Endothelial cell of umbilical vein (primary cell): ENCODE measurements at regions of chr3 and their contacts with region 1.

Region 1: GRCh38 chr3:30538787-30539186 is 67.6 kb upstream of the TGFBR2 start:
- DNase-seq: peak; percentile 93
- H3K4me3 ChIP-seq: no peak overlapping the region
- H3K27ac ChIP-seq: peak overlapping the region; percentile 97
- H3K4me1 ChIP-seq: peaks cover 26% of the 10 kb centered on the region
- H3K27me3 ChIP-seq: no peaks in the 10 kb centered on the region
- CTCF ChIP-seq: no peak
- POLR2A ChIP-seq: no peak

Region 2: DNA sequence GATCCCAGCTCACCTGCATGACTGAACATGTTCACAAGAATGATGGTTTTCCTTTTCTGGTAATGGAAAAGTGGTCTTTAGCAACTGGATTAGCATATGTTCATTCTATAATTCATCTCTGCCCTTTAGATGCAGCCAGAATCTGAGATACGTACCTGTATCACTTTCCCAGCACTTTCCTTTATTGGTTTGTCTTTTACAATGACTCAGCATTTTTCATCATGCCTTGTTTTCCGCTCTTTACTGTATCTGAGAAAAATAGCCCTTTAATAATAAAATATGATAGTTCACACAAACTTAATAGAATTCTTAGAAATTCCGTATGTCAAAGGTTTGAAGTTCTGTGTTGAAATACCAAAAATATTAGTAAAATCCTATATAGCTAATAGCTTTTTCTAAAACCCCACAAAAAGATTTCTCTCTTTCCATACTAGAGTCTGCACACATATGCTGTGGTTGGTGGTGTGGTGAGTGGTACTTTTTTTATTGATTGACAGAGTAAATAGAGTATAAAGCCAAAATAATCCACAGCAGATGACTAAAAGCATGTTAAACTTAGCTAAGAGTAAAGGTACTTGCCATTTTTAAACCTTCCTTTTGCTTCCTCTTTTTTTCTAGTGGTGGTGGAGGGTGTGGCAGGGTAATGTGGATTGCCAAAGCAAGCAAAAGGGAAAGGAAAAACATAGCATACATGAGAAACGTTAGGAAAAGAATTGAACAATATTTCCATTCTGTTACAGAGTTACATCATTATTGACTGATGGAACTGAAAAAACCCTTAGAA is 1586.8 kb before region 1 on chr3:
- CTCF ChIA-PET with region 1: no interaction called
- POLR2A ChIA-PET with region 1: no interaction called
- dilution Hi-C with region 1: no loop called
- intact Hi-C with region 1: no loop called
- DNase-seq: no peak
- H3K4me3 ChIP-seq: no peak overlapping the region
- H3K27ac ChIP-seq: no peak overlapping the region
- H3K4me1 ChIP-seq: no peaks in the 10 kb centered on the region
- H3K27me3 ChIP-seq: no peaks in the 10 kb centered on the region
- CTCF ChIP-seq: no peak
- POLR2A ChIP-seq: no peak

Region 3: DNA sequence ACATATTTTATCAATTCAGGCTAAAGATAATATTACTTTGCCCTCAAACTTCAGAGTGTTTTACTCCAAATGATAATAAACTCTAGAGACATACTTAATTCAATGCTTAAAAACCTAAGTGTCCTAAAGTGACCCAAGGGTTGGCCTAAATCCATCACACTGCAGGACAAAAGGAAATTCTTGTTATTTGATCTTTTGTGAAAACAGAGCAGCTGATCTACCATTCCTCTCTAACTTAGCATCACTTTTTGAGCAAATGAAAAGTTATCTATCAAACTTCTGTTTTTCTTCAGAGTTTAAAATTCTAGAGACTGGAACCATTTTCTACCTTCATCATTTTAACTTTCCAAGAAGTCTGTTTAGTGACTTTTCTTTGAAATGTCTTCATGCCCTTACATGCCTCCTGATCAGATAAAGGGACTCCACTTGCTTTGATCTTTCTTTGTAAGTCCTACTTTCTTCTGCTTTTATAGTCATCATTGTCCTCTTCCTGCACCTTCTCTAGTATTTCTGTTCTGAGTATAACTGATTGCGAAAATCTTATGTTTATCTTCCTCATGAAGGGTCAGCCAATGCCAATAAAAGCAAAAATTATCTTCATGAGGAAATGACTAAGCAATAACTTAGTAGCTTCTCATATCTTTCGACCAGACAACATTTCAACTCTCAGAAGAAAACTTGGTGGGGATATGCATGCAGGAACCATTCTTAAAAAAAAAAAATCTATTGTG is 311.1 kb before region 1 on chr3:
- CTCF ChIA-PET with region 1: interaction called, 4 read pairs
- POLR2A ChIA-PET with region 1: no interaction called
- dilution Hi-C with region 1: no loop called
- intact Hi-C with region 1: loop called (anchors 1 kb)
- DNase-seq: peak; percentile 90
- H3K4me3 ChIP-seq: no peak overlapping the region
- H3K27ac ChIP-seq: peak overlapping the region; percentile 67
- H3K4me1 ChIP-seq: peaks cover 26% of the 10 kb centered on the region
- H3K27me3 ChIP-seq: no peaks in the 10 kb centered on the region
- CTCF ChIP-seq: no peak
- POLR2A ChIP-seq: no peak

Region 4: GRCh38 chr3:30527720-30528119 is 11.1 kb before region 1 on chr3:
- CTCF ChIA-PET with region 1: interaction called, 7 read pairs
- POLR2A ChIA-PET with region 1: no interaction called
- dilution Hi-C with region 1: no loop called
- intact Hi-C with region 1: loop called (anchors 1 kb)
- DNase-seq: peak; percentile 96
- H3K4me3 ChIP-seq: peak overlapping the region in 1 of 3 experiments; percentile 2
- H3K27ac ChIP-seq: peak overlapping the region; percentile 90
- H3K4me1 ChIP-seq: peaks cover 28% of the 10 kb centered on the region
- H3K27me3 ChIP-seq: no peaks in the 10 kb centered on the region
- CTCF ChIP-seq: no peak
- POLR2A ChIP-seq: no peak

Region 5: GRCh38 chr3:30658328-30659052 is 119.7 kb after region 1 on chr3:
- CTCF ChIA-PET with region 1: interaction called, 3 read pairs
- POLR2A ChIA-PET with region 1: no interaction called
- dilution Hi-C with region 1: no loop called
- intact Hi-C with region 1: loop called (anchors 1 kb)
- DNase-seq: peak; percentile 95
- H3K4me3 ChIP-seq: no peak overlapping the region
- H3K27ac ChIP-seq: peak overlapping the region; percentile 98
- H3K4me1 ChIP-seq: peaks cover 100% of the 10 kb centered on the region
- H3K27me3 ChIP-seq: no peaks in the 10 kb centered on the region
- CTCF ChIP-seq: no peak
- POLR2A ChIP-seq: peak; percentile 68